Activated CD4-positive, alpha-beta T cell treated with anti-CD3 and anti-CD28 coated beads for 36 hours (primary cell): ENCODE measurements at regions of chr19 and their contacts with region 1.

Region 1: GRCh38 chr19:36915992-36916830 is at the starts of genes ZNF568 and ZNF829:
- DNase-seq: peak; percentile 97
- ATAC-seq: peak; percentile 98
- H3K4me3 Mint-ChIP-seq: peak within 1 kb of the TSS; percentile 88
- H3K27ac Mint-ChIP-seq: peak within 1 kb of the TSS; percentile 98
- H3K4me1 Mint-ChIP-seq: peaks cover 15% of the 10 kb centered on the region
- H3K27me3 Mint-ChIP-seq: no peaks in the 10 kb centered on the region
- total RNA-seq, gene ZNF568: 6.5 to 8.4 TPM
- total RNA-seq, gene ZNF829: 7.1 TPM

Region 2: GRCh38 chr19:36489118-36489919 is 426.9 kb before region 1 on chr19 and contains the start of gene ZNF566:
- CTCF ChIA-PET with region 1: interaction called, 3 read pairs
- POLR2A ChIA-PET with region 1: no interaction called
- intact Hi-C with region 1: loop called in 1 of 2 experiments (anchors 1 kb)
- DNase-seq: peak; percentile 97
- ATAC-seq: peak; percentile 93
- H3K4me3 Mint-ChIP-seq: peak within 1 kb of the TSS; percentile 86
- H3K27ac Mint-ChIP-seq: peak within 1 kb of the TSS; percentile 98
- H3K4me1 Mint-ChIP-seq: peaks cover 24% of the 10 kb centered on the region
- H3K27me3 Mint-ChIP-seq: no peaks in the 10 kb centered on the region
- total RNA-seq, gene ZNF566: 4.7 to 5.9 TPM

Region 3: GRCh38 chr19:36665832-36666231 is 250.4 kb before region 1 on chr19:
- CTCF ChIA-PET with region 1: no interaction called
- POLR2A ChIA-PET with region 1: no interaction called
- intact Hi-C with region 1: loop called in 1 of 2 experiments (anchors 1 kb)
- DNase-seq: no peak
- ATAC-seq: no peak
- H3K4me3 Mint-ChIP-seq: peak overlapping the region; percentile 98
- H3K27ac Mint-ChIP-seq: peak overlapping the region; percentile 99
- H3K4me1 Mint-ChIP-seq: peaks cover 26% of the 10 kb centered on the region
- H3K27me3 Mint-ChIP-seq: no peaks in the 10 kb centered on the region

Region 4: GRCh38 chr19:36837906-36838783 is 78.1 kb before region 1 on chr19 and contains the start of gene ZNF790:
- CTCF ChIA-PET with region 1: no interaction called
- POLR2A ChIA-PET with region 1: no interaction called
- intact Hi-C with region 1: loop called in 1 of 2 experiments (anchors 1 kb)
- DNase-seq: peak; percentile 92
- ATAC-seq: peak; percentile 97
- H3K4me3 Mint-ChIP-seq: no peak within 1 kb of the TSS
- H3K27ac Mint-ChIP-seq: peak within 1 kb of the TSS; percentile 72
- H3K4me1 Mint-ChIP-seq: peaks cover 2% of the 10 kb centered on the region
- H3K27me3 Mint-ChIP-seq: no peaks in the 10 kb centered on the region
- total RNA-seq, gene ZNF790: 7.1 to 8.8 TPM

Region 5: DNA sequence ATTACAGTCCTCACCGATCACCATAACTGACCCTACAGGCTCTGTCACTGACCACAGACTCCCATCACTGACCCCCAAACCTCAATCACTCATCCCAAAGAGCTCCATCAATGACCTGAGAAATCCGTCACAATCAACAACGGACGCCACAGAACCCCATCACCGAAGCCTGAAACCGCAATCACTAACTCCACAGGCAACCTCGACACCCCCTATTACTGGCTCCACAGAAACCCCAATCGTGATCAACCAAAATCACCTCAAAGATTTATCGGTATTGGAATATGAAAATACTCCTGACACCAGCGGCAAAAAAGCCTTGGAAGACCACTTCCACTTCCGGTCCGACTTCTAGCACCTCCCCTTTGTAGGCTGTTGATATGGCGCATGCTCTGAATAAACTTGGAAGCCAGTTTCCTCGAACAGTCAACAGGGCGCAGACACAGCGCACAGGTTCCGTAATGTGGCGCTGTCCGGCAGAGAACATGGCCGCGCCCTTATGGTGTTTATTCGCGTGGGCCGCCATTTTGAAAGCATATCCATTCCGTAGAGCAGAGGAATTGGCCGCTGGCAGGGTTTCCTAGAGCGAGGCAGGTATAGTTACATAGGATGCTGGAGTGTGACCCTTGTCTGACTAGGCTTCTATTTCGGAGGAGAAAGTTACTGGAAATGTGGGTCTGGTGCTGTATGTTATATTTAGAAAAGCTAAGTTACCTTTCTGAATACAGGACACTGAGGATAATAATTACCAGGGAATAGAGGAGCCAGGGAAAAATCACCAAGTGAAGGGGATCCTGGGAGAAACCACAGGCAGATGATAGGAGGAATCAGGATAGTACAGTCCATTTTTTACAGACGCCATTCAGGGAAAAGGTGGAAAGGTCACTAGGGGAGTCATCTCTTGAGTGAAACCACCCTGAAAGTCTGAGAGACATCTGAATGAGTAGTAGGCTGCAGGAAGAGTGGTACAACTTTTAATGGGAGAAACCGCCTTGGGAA is 256.5 kb after region 1 on chr19 and contains the start of gene ZNF585A:
- CTCF ChIA-PET with region 1: no interaction called
- POLR2A ChIA-PET with region 1: no interaction called
- intact Hi-C with region 1: loop called (anchors 1 kb)
- DNase-seq: peak; percentile 92
- ATAC-seq: peak; percentile 100
- H3K4me3 Mint-ChIP-seq: no peak within 1 kb of the TSS
- H3K27ac Mint-ChIP-seq: no peak within 1 kb of the TSS
- H3K4me1 Mint-ChIP-seq: no peaks in the 10 kb centered on the region
- H3K27me3 Mint-ChIP-seq: no peaks in the 10 kb centered on the region
- total RNA-seq, gene ZNF585A: 8.7 to 9.8 TPM

Region 6: GRCh38 chr19:37655689-37656371 is 739.6 kb after region 1 on chr19:
- CTCF ChIA-PET with region 1: no interaction called
- POLR2A ChIA-PET with region 1: no interaction called
- intact Hi-C with region 1: loop called in 1 of 2 experiments (anchors 5 kb)
- DNase-seq: peak; percentile 93
- ATAC-seq: peak; percentile 79
- H3K4me3 Mint-ChIP-seq: peak overlapping the region; percentile 94
- H3K27ac Mint-ChIP-seq: peak overlapping the region; percentile 99
- H3K4me1 Mint-ChIP-seq: peaks cover 33% of the 10 kb centered on the region
- H3K27me3 Mint-ChIP-seq: no peaks in the 10 kb centered on the region